Activated naive CD4-positive, alpha-beta T cell treated with anti-CD3 and anti-CD28 coated beads for 36 hours (primary cell): ENCODE measurements at regions of chr1 and their contacts with region 1.

Region 1: GRCh38 chr1:55277377-55278130 is 62.4 kb upstream of the USP24 start:
- DNase-seq: peak; percentile 94
- H3K4me3 Mint-ChIP-seq: peak overlapping the region; percentile 5
- H3K27ac Mint-ChIP-seq: peak overlapping the region; percentile 37
- H3K4me1 Mint-ChIP-seq: peaks cover 22% of the 10 kb centered on the region
- H3K27me3 Mint-ChIP-seq: peaks cover 2% of the 10 kb centered on the region

Region 2: GRCh38 chr1:54835970-54836369 is 441.6 kb before region 1 on chr1:
- CTCF ChIA-PET with region 1: no interaction called
- intact Hi-C with region 1: no loop called
- DNase-seq: no peak
- H3K4me3 Mint-ChIP-seq: no peak overlapping the region
- H3K27ac Mint-ChIP-seq: no peak overlapping the region
- H3K4me1 Mint-ChIP-seq: no peaks in the 10 kb centered on the region
- H3K27me3 Mint-ChIP-seq: no peaks in the 10 kb centered on the region

Region 3: GRCh38 chr1:54950369-54951163 is 327.0 kb before region 1 on chr1:
- CTCF ChIA-PET with region 1: no interaction called
- intact Hi-C with region 1: loop called (anchors 1 kb)
- DNase-seq: peak; percentile 81
- H3K4me3 Mint-ChIP-seq: no peak overlapping the region
- H3K27ac Mint-ChIP-seq: no peak overlapping the region
- H3K4me1 Mint-ChIP-seq: no peaks in the 10 kb centered on the region
- H3K27me3 Mint-ChIP-seq: no peaks in the 10 kb centered on the region

Region 4: GRCh38 chr1:55021965-55022546 is 255.5 kb before region 1 on chr1:
- CTCF ChIA-PET with region 1: no interaction called
- intact Hi-C with region 1: loop called (anchors 1 kb)
- DNase-seq: peak; percentile 82
- H3K4me3 Mint-ChIP-seq: no peak overlapping the region
- H3K27ac Mint-ChIP-seq: no peak overlapping the region
- H3K4me1 Mint-ChIP-seq: no peaks in the 10 kb centered on the region
- H3K27me3 Mint-ChIP-seq: no peaks in the 10 kb centered on the region

Region 5: DNA sequence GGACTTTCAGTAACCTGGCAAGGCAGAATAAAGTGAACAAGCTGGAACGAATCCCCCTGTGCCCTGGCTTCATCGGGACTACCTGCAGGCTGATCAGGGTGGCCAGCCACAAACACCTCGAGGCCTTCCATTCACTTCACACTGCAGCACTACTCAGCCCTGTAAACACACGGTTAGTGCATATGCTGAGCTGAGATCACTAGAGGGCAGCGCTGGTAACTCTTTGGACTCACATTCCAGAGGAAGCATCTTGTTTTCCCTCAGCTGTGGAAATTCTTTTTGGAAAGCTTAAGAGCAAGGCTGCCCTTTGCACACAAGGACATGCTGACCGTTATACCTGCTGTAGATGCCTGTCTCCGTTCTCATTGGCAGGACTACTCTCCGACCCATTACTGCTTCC is 206.1 kb before region 1 on chr1:
- CTCF ChIA-PET with region 1: interaction called, 4 read pairs
- intact Hi-C with region 1: loop called (anchors 1 kb)
- DNase-seq: peak; percentile 39
- H3K4me3 Mint-ChIP-seq: no peak overlapping the region
- H3K27ac Mint-ChIP-seq: no peak overlapping the region
- H3K4me1 Mint-ChIP-seq: peaks cover 16% of the 10 kb centered on the region
- H3K27me3 Mint-ChIP-seq: no peaks in the 10 kb centered on the region

Region 6: GRCh38 chr1:55140546-55140983 is 137.0 kb before region 1 on chr1:
- CTCF ChIA-PET with region 1: interaction called, 121 read pairs
- intact Hi-C with region 1: loop called (anchors 1 kb)
- DNase-seq: peak; percentile 89
- H3K4me3 Mint-ChIP-seq: no peak overlapping the region
- H3K27ac Mint-ChIP-seq: peak overlapping the region; percentile 81
- H3K4me1 Mint-ChIP-seq: peaks cover 15% of the 10 kb centered on the region
- H3K27me3 Mint-ChIP-seq: no peaks in the 10 kb centered on the region

Region 7: GRCh38 chr1:55150880-55151588 is 126.5 kb before region 1 on chr1:
- CTCF ChIA-PET with region 1: interaction called, 10 read pairs
- intact Hi-C with region 1: no loop called
- DNase-seq: no peak
- H3K4me3 Mint-ChIP-seq: peak overlapping the region; percentile 38
- H3K27ac Mint-ChIP-seq: peak overlapping the region; percentile 92
- H3K4me1 Mint-ChIP-seq: peaks cover 33% of the 10 kb centered on the region
- H3K27me3 Mint-ChIP-seq: no peaks in the 10 kb centered on the region

Region 8: DNA sequence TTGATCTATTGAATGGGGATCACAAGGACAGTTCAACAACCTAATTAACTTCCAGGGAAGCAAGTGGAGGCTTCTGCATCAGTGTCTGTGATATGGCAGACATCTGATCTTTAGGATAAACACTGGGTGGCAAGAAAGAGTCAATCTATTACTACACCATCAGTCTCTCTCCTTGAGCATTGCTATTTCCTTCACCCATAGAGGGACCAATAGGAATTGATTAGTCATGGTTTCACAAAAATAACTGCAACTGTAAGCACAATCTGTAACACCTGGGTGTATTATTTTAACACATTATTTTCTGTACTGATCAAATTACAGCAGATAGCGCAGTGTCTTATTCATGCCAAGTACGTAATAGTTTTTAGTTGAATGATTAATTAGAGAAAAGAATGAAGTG is 112.6 kb before region 1 on chr1:
- CTCF ChIA-PET with region 1: interaction called, 4 read pairs
- intact Hi-C with region 1: loop called (anchors 1 kb)
- DNase-seq: no peak
- H3K4me3 Mint-ChIP-seq: no peak overlapping the region
- H3K27ac Mint-ChIP-seq: peak overlapping the region; percentile 60
- H3K4me1 Mint-ChIP-seq: peaks cover 46% of the 10 kb centered on the region
- H3K27me3 Mint-ChIP-seq: no peaks in the 10 kb centered on the region